B cell (primary cell): ENCODE measurements at regions of chr2 and their contacts with region 1.

Region 1: DNA sequence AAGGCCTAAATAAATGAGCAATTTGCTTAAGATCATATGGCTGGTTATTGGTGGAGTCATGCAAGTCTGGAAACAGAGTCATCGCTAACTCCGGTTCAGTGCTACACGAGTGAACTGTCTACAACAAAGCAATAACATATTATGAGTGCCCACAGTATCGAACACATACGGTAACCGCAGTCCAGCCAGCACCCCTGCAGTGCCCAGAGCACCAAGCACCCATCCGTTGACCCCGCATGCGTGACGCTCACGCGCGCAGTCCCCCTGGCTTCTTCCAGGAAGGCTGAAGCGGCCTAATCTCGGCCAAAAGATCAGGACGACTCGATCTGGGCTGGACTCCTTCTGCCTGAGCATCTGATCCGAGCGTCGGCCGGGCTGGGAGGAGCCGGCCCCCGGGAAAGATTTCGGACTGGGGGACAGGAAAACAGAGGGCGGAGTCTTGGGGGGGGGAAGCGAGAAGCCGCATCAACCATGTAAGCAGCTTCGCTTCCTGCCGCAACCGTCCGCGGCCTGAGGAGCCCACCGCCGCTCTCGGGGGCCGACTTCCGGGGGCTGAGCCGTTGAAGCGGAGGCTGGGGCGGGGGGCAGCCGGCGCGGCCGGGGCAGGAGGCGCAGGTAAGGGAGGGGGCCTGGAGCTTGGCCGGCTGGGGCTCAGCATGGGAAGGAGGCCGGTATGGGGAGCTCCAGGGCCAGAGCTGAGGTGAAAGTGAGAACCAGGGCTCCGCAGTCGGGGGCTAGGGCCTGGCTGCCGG is at the start of gene PIKFYVE:
- DNase-seq: peak; percentile 96
- ATAC-seq: peak; percentile 87
- H3K4me3 ChIP-seq: peak within 1 kb of the TSS; percentile 61 to 98 (median 76)
- H3K4me3 Mint-ChIP-seq: peak within 1 kb of the TSS; percentile 95
- H3K27ac ChIP-seq: peak within 1 kb of the TSS; percentile 85 to 89
- H3K27ac Mint-ChIP-seq: peak within 1 kb of the TSS; percentile 99
- H3K4me1 ChIP-seq: peaks cover 34 to 42% of the 10 kb centered on the region in 2 donors
- H3K4me1 Mint-ChIP-seq: peaks cover 44% of the 10 kb centered on the region
- H3K27me3 ChIP-seq: no peaks in the 10 kb centered on the region
- H3K27me3 Mint-ChIP-seq: no peaks in the 10 kb centered on the region
- CTCF ChIP-seq: no peak
- total RNA-seq, gene PIKFYVE: 79.3 and 80.9 TPM in 2 replicates

Region 2: GRCh38 chr2:206765242-206766056 is 1500.5 kb before region 1 on chr2 and contains the starts of genes FASTKD2 and MDH1B:
- CTCF ChIA-PET with region 1: no interaction called
- POLR2A ChIA-PET with region 1: no interaction called
- intact Hi-C with region 1: loop called (anchors 5 kb)
- DNase-seq: peak; percentile 96
- ATAC-seq: peak; percentile 85
- H3K4me3 ChIP-seq: peak within 1 kb of the TSS; percentile 63 to 96 (median 87)
- H3K4me3 Mint-ChIP-seq: peak within 1 kb of the TSS; percentile 99
- H3K27ac ChIP-seq: peak within 1 kb of the TSS; percentile 77 to 92
- H3K27ac Mint-ChIP-seq: peak within 1 kb of the TSS; percentile 97
- H3K4me1 ChIP-seq: peaks cover 14% of the 10 kb centered on the region in 2 donors
- H3K4me1 Mint-ChIP-seq: peaks cover 32% of the 10 kb centered on the region
- H3K27me3 ChIP-seq: peaks cover 0 to 17% (median 6%) of the 10 kb centered on the region in 4 experiments
- H3K27me3 Mint-ChIP-seq: no peaks in the 10 kb centered on the region
- CTCF ChIP-seq: no peak
- total RNA-seq, gene FASTKD2: 20.6 and 24.5 TPM in 2 replicates
- total RNA-seq, gene MDH1B: 0.34 TPM in 1 of 2 replicates, not detected in the other

Region 3: DNA sequence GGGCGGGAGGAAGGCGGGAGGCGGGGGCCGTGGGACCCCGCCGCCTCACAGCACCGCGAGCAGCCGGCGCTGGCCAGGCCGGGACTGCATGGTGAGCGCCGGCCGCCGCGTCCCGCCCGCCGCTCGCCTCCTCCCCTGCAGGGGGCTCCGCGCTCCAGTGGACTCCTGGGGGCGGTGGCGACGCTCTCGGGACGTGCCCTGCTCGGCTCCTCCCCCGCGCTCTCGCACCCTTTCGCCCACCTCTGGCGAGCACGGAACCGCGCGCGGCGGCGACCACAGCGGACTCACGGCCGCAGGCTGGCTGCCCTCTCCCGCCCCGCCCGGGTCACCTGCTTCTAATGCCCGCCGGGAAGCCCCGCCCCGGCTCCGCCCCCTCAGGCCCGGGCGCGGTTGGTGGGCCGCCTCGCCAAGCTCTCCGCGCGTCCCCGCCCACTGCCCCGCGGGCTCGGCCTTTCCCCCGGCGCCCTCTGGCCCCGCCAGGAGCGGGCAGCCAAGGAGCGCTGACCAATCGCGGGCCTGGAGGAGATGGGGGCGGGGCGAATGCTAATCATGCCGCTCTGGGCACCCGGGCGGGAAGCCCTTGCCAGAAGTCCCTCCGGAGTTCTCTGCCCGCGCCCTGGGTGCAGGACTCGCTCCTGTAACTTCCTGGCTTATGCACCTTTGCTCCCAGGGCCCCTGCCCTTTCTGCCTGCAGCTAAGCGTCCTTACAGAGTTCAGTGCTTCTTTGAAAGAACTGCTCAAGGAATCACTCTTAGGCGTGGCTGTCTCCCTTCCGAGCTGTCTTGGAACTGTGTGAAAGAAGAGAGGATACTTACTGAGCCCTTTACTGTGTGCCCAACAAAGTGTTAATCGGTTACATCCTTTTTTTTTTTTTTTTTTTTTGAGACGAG is 496.1 kb before region 1 on chr2 and contains the start of gene FZD5:
- CTCF ChIA-PET with region 1: no interaction called
- POLR2A ChIA-PET with region 1: no interaction called
- intact Hi-C with region 1: loop called (anchors 5 kb)
- DNase-seq: peak; percentile 89
- ATAC-seq: peak; percentile 88
- H3K4me3 ChIP-seq: peak within 1 kb of the TSS; percentile 55 to 87 (median 65)
- H3K4me3 Mint-ChIP-seq: peak within 1 kb of the TSS; percentile 89
- H3K27ac ChIP-seq: no peak within 1 kb of the TSS
- H3K27ac Mint-ChIP-seq: peak within 1 kb of the TSS; percentile 80
- H3K4me1 ChIP-seq: peaks cover 32 to 44% of the 10 kb centered on the region in 2 donors
- H3K4me1 Mint-ChIP-seq: peaks cover 36% of the 10 kb centered on the region
- H3K27me3 ChIP-seq: peaks cover 0 to 15% (median 4%) of the 10 kb centered on the region in 4 experiments
- H3K27me3 Mint-ChIP-seq: peaks cover 6% of the 10 kb centered on the region
- CTCF ChIP-seq: peak; percentile 33
- total RNA-seq, gene FZD5: 1.8 and 2.5 TPM in 2 replicates

Region 4: GRCh38 chr2:208175069-208175839 is 90.7 kb before region 1 on chr2:
- CTCF ChIA-PET with region 1: no interaction called
- POLR2A ChIA-PET with region 1: no interaction called
- intact Hi-C with region 1: loop called (anchors 5 kb)
- DNase-seq: peak; percentile 68
- ATAC-seq: peak; percentile 90
- H3K4me3 ChIP-seq: no peak overlapping the region
- H3K4me3 Mint-ChIP-seq: no peak overlapping the region
- H3K27ac ChIP-seq: no peak overlapping the region
- H3K27ac Mint-ChIP-seq: no peak overlapping the region
- H3K4me1 ChIP-seq: no peaks in the 10 kb centered on the region
- H3K4me1 Mint-ChIP-seq: peaks cover 3% of the 10 kb centered on the region
- H3K27me3 ChIP-seq: peaks cover 0 to 5% (median 0%) of the 10 kb centered on the region in 4 experiments
- H3K27me3 Mint-ChIP-seq: peaks cover 21% of the 10 kb centered on the region
- CTCF ChIP-seq: peak; percentile 91

Region 5: DNA sequence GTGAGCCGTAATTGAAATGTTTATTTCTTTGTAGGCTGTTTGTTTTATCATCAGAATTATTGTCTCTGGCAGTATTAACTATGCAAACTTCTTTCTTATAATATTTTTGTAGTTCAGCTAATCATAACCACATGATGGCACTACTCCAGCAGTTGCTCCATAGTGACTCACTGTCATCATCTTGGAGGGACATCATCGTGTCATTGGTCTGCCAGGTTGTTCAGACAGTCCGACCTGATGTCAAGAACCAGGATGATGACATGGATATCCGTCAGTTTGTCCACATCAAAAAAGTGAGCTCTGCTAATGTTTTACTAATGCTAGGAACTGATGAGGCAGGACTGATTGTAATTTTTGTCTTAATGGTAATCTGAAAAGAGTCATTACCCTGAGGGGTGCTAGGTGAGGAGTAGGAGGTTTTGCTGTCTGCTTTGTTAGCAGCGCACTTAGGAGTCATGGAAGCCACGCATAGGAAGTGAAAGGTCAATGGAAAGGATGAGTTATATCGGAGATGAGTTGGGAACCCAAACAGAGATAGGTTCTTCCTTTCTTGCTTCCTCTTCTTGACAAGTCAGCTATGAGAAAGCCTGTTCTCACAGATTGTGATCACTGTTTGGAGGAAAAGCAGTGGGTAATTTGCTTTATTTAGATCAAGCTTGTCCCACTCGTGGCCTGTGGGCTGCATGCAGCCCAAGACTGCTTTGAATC is 49.3 kb after region 1 on chr2:
- CTCF ChIA-PET with region 1: interaction called, 5 read pairs
- POLR2A ChIA-PET with region 1: interaction called, 11 read pairs
- intact Hi-C with region 1: loop called (anchors 2 kb)
- DNase-seq: peak; percentile 65
- ATAC-seq: peak; percentile 52
- H3K4me3 ChIP-seq: peak overlapping the region in 3 of 5 experiments; percentile 20 to 71 (median 34)
- H3K4me3 Mint-ChIP-seq: peak overlapping the region; percentile 84
- H3K27ac ChIP-seq: peak overlapping the region; percentile 76 to 96
- H3K27ac Mint-ChIP-seq: peak overlapping the region; percentile 95
- H3K4me1 ChIP-seq: peaks cover 65 to 78% of the 10 kb centered on the region in 2 donors
- H3K4me1 Mint-ChIP-seq: peaks cover 75% of the 10 kb centered on the region
- H3K27me3 ChIP-seq: no peaks in the 10 kb centered on the region
- H3K27me3 Mint-ChIP-seq: no peaks in the 10 kb centered on the region
- CTCF ChIP-seq: peak; percentile 16

Region 6: GRCh38 chr2:210171309-210172203 is 1905.6 kb after region 1 on chr2 and contains the start of gene KANSL1L:
- CTCF ChIA-PET with region 1: no interaction called
- POLR2A ChIA-PET with region 1: interaction called, 7 read pairs
- intact Hi-C with region 1: loop called (anchors 2 kb)
- DNase-seq: peak; percentile 96
- ATAC-seq: peak; percentile 85
- H3K4me3 ChIP-seq: peak within 1 kb of the TSS; percentile 75 to 96 (median 87)
- H3K4me3 Mint-ChIP-seq: peak within 1 kb of the TSS; percentile 92
- H3K27ac ChIP-seq: peak within 1 kb of the TSS; percentile 91 to 93
- H3K27ac Mint-ChIP-seq: peak within 1 kb of the TSS; percentile 97
- H3K4me1 ChIP-seq: peaks cover 13 to 18% of the 10 kb centered on the region in 2 donors
- H3K4me1 Mint-ChIP-seq: peaks cover 17% of the 10 kb centered on the region
- H3K27me3 ChIP-seq: peaks cover 0 to 5% (median 0%) of the 10 kb centered on the region in 4 experiments
- H3K27me3 Mint-ChIP-seq: peaks cover 7% of the 10 kb centered on the region
- CTCF ChIP-seq: no peak
- total RNA-seq, gene KANSL1L: 21.1 and 25.5 TPM in 2 replicates